ENCODE measurements at regions of chr12 and their contacts with region 1.

Region 1: DNA sequence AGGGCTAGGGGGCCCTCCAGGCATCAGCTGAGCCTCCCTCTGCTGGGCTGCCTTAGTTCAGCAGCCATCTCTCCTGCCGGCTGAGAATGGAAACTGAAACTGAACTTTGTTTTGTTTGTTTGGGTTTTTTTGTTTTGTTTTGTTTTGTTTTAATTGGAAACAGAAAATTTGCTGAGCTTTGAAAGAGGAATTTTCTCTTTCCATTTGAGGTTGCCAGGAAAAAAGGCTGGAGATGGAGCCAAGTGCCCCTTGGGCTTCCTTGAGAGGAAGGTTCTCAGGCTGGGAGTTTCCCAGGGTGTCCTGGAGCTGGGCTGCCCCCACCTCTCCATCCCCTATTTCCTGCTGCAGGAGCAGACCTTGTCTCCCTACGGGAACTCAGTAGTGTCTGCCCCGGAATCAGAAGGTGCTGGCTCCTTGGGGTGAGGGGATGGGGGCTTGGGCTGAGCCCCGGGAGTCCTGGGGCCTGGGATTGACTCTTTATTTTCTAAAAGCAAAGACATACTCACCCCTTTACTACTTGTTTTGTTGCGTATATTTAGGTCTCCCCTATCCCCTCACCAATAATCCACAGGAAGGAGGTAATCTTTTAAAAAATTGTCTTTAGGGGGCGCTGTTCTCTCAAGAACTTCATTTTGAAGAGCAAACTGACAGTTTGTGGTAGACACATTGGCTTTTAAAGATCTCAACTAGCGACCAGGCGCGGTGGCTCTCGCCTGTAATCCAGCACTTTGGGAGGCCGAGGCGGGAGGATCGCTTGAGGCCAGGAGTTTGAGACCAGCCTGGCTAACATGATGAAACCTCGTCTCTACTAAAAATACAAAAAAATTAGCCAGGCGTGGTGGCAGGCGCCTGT is 21.3 kb upstream of the OASL start:
- DNase-seq: peak; percentile 74
- H3K4me3 Mint-ChIP-seq: peak overlapping the region; percentile 70
- H3K27ac Mint-ChIP-seq: peak overlapping the region; percentile 87
- H3K4me1 Mint-ChIP-seq: peaks cover 11% of the 10 kb centered on the region
- H3K27me3 Mint-ChIP-seq: no peaks in the 10 kb centered on the region

Region 2: GRCh38 chr12:120879102-120879501 is 181.3 kb before region 1 on chr12:
- CTCF ChIA-PET with region 1: no interaction called
- POLR2A ChIA-PET with region 1: no interaction called
- intact Hi-C with region 1: no loop called
- DNase-seq: no peak
- H3K4me3 Mint-ChIP-seq: no peak overlapping the region
- H3K27ac Mint-ChIP-seq: no peak overlapping the region
- H3K4me1 Mint-ChIP-seq: peaks cover 41% of the 10 kb centered on the region
- H3K27me3 Mint-ChIP-seq: no peaks in the 10 kb centered on the region

Region 3: GRCh38 chr12:121005346-121005815 is 55.0 kb before region 1 on chr12:
- CTCF ChIA-PET with region 1: interaction called, 72 read pairs
- POLR2A ChIA-PET with region 1: no interaction called
- intact Hi-C with region 1: loop called (anchors 1 kb)
- DNase-seq: peak; percentile 76
- H3K4me3 Mint-ChIP-seq: no peak overlapping the region
- H3K27ac Mint-ChIP-seq: peak overlapping the region; percentile 64
- H3K4me1 Mint-ChIP-seq: no peaks in the 10 kb centered on the region
- H3K27me3 Mint-ChIP-seq: no peaks in the 10 kb centered on the region

Region 4: GRCh38 chr12:121038861-121039666 is 21.3 kb before region 1 on chr12 and contains the start of gene OASL:
- CTCF ChIA-PET with region 1: interaction called, 15 read pairs
- POLR2A ChIA-PET with region 1: interaction called, 5 read pairs
- intact Hi-C with region 1: loop called (anchors 1 kb)
- DNase-seq: peak; percentile 75
- H3K4me3 Mint-ChIP-seq: peak within 1 kb of the TSS; percentile 85
- H3K27ac Mint-ChIP-seq: peak within 1 kb of the TSS; percentile 84
- H3K4me1 Mint-ChIP-seq: peaks cover 50% of the 10 kb centered on the region
- H3K27me3 Mint-ChIP-seq: peaks cover 9% of the 10 kb centered on the region
- total RNA-seq, gene OASL: 21.9 to 26.5 TPM

Region 5: GRCh38 chr12:121110211-121110940 is 50.0 kb after region 1 on chr12:
- CTCF ChIA-PET with region 1: interaction called, 24 read pairs
- POLR2A ChIA-PET with region 1: no interaction called
- intact Hi-C with region 1: loop called (anchors 1 kb)
- DNase-seq: peak; percentile 75
- H3K4me3 Mint-ChIP-seq: no peak overlapping the region
- H3K27ac Mint-ChIP-seq: peak overlapping the region; percentile 42
- H3K4me1 Mint-ChIP-seq: peaks cover 3% of the 10 kb centered on the region
- H3K27me3 Mint-ChIP-seq: no peaks in the 10 kb centered on the region

Region 6: GRCh38 chr12:121230538-121230907 is 170.1 kb after region 1 on chr12:
- CTCF ChIA-PET with region 1: interaction called, 7 read pairs
- POLR2A ChIA-PET with region 1: no interaction called
- intact Hi-C with region 1: loop called (anchors 2 kb)
- DNase-seq: no peak
- H3K4me3 Mint-ChIP-seq: no peak overlapping the region
- H3K27ac Mint-ChIP-seq: no peak overlapping the region
- H3K4me1 Mint-ChIP-seq: peaks cover 19% of the 10 kb centered on the region
- H3K27me3 Mint-ChIP-seq: no peaks in the 10 kb centered on the region

Measured in activated CD4-positive, alpha-beta memory T cell treated with anti-CD3 and anti-CD28 coated beads for 36 hours (primary cell).